Activated CD4-positive, alpha-beta T cell treated with anti-CD3 and anti-CD28 coated beads for 36 hours (primary cell): ENCODE measurements at regions of chr18 and their contacts with region 1.

Region 1: GRCh38 chr18:31685097-31686082 is 1.0 kb upstream of the B4GALT6 start:
- DNase-seq: peak; percentile 74
- ATAC-seq: peak; percentile 80
- H3K4me3 Mint-ChIP-seq: peak overlapping the region; percentile 73
- H3K27ac Mint-ChIP-seq: peak overlapping the region; percentile 78
- H3K4me1 Mint-ChIP-seq: peaks cover 16% of the 10 kb centered on the region
- H3K27me3 Mint-ChIP-seq: peaks cover 39% of the 10 kb centered on the region

Region 2: GRCh38 chr18:30163573-30163972 is 1521.8 kb before region 1 on chr18:
- CTCF ChIA-PET with region 1: no interaction called
- POLR2A ChIA-PET with region 1: no interaction called
- intact Hi-C with region 1: no loop called
- DNase-seq: no peak
- ATAC-seq: no peak
- H3K4me3 Mint-ChIP-seq: no peak overlapping the region
- H3K27ac Mint-ChIP-seq: no peak overlapping the region
- H3K4me1 Mint-ChIP-seq: no peaks in the 10 kb centered on the region
- H3K27me3 Mint-ChIP-seq: no peaks in the 10 kb centered on the region

Region 3: GRCh38 chr18:31497837-31498573 is 187.4 kb before region 1 on chr18 and contains the start of gene DSG2:
- CTCF ChIA-PET with region 1: no interaction called
- POLR2A ChIA-PET with region 1: no interaction called
- intact Hi-C with region 1: loop called in 1 of 2 experiments (anchors 2 kb)
- DNase-seq: peak; percentile 61
- ATAC-seq: peak; percentile 81
- H3K4me3 Mint-ChIP-seq: peak within 1 kb of the TSS; percentile 73
- H3K27ac Mint-ChIP-seq: peak within 1 kb of the TSS; percentile 76
- H3K4me1 Mint-ChIP-seq: peaks cover 5% of the 10 kb centered on the region
- H3K27me3 Mint-ChIP-seq: peaks cover 29% of the 10 kb centered on the region
- total RNA-seq, gene DSG2: 1.1 to 1.3 TPM

Region 4: DNA sequence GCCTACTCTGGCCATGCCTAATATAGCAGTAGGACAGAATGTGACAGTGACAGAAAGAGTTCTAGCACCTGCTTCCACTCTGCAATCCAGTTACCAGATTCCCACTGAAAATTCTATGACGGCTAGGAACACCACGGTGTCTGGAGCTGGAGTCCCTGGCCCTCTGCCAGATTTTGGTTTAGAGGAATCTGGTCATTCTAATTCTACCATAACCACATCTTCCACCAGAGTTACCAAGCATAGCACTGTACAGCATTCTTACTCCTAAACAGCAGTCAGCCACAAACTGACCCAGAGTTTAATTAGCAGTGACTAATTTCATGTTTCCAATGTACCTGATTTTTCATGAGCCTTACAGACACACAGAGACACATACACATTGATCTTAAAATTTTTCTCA is 138.9 kb before region 1 on chr18:
- CTCF ChIA-PET with region 1: no interaction called
- POLR2A ChIA-PET with region 1: no interaction called
- intact Hi-C with region 1: no loop called
- DNase-seq: no peak
- ATAC-seq: no peak
- H3K4me3 Mint-ChIP-seq: no peak overlapping the region
- H3K27ac Mint-ChIP-seq: no peak overlapping the region
- H3K4me1 Mint-ChIP-seq: no peaks in the 10 kb centered on the region
- H3K27me3 Mint-ChIP-seq: no peaks in the 10 kb centered on the region

Region 5: DNA sequence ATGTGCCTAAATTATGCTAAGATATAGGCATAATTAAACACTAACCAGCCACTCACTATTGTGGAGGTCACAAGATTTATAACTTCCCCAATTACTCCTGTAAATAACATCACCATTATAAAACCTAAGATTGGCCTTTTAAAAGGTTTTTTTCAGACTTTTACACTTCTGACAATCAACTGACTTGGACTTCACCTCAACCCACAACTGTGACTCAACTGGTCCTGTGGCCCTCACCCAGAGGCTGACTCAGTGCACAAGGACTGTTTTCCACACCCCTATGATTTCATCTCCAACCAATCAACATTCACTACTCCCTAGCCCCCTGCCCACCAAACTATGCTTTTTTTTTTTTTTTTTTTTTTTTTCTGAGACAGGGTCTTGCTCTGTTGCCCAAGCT is 82.1 kb before region 1 on chr18:
- CTCF ChIA-PET with region 1: no interaction called
- POLR2A ChIA-PET with region 1: no interaction called
- intact Hi-C with region 1: loop called in 1 of 2 experiments (anchors 5 kb)
- DNase-seq: peak; percentile 57
- ATAC-seq: peak; percentile 85
- H3K4me3 Mint-ChIP-seq: no peak overlapping the region
- H3K27ac Mint-ChIP-seq: no peak overlapping the region
- H3K4me1 Mint-ChIP-seq: peaks cover 2% of the 10 kb centered on the region
- H3K27me3 Mint-ChIP-seq: peaks cover 13% of the 10 kb centered on the region

Region 6: GRCh38 chr18:31658670-31659575 is 26.5 kb before region 1 on chr18:
- CTCF ChIA-PET with region 1: interaction called, 5 read pairs
- POLR2A ChIA-PET with region 1: no interaction called
- intact Hi-C with region 1: loop called (anchors 1 to 2 kb)
- DNase-seq: peak; percentile 34
- ATAC-seq: peak; percentile 90
- H3K4me3 Mint-ChIP-seq: no peak overlapping the region
- H3K27ac Mint-ChIP-seq: peak overlapping the region; percentile 73
- H3K4me1 Mint-ChIP-seq: peaks cover 22% of the 10 kb centered on the region
- H3K27me3 Mint-ChIP-seq: peaks cover 2% of the 10 kb centered on the region

Region 7: DNA sequence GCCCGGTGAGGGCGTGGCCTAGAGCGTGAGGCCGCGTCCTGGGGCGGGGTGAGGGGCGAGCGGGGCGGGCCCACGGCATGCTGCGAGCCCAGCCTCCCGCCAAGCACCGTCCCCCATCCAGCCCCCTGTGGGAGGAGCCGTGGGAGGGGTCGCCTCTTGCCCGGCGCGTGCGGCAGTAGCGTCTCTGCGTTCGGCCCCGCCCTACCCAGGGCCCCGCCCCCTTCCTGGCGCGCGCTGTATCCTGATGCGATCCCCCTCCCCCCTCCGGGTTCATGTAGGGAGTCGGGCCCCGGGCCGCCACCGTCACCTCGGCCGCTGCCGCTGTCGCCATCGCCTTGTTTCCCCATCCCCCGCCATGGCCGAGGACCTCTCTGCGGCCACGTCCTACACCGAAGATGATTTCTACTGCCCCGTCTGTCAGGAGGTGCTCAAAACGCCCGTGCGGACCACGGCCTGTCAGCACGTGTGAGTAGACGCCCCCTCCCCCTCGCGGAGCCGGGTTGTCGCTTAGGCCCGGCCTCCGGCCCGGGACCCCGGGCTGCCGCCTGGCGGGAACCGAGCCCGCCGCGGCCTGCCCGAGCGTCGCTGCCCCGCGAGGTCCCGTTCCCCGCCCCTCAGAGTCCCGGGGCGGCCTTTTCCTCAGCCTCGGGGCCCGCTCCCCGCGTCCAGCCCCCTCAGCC is 407.2 kb after region 1 on chr18:
- CTCF ChIA-PET with region 1: no interaction called
- POLR2A ChIA-PET with region 1: no interaction called
- intact Hi-C with region 1: loop called in 1 of 2 experiments (anchors 1 kb)
- DNase-seq: peak; percentile 100
- ATAC-seq: peak; percentile 89
- H3K4me3 Mint-ChIP-seq: peak overlapping the region; percentile 93
- H3K27ac Mint-ChIP-seq: peak overlapping the region; percentile 97
- H3K4me1 Mint-ChIP-seq: peaks cover 41% of the 10 kb centered on the region
- H3K27me3 Mint-ChIP-seq: no peaks in the 10 kb centered on the region